Heart right ventricle (tissue), 16 donors: ENCODE measurements at regions of chr15 and their contacts with region 1.

Region 1: GRCh38 chr15:40405501-40406381 is at the start of gene IVD:
- DNase-seq: peak; percentile 95 to 96
- ATAC-seq: peak; percentile 99 to 100 (median 100)
- H3K4me3 ChIP-seq: peak within 1 kb of the TSS; percentile 67 to 98 (median 82)
- H3K27ac ChIP-seq: peak within 1 kb of the TSS in 9 of 10 donors; percentile 62 to 87 (median 78)
- H3K4me1 ChIP-seq: peaks cover 0 to 31% (median 23%) of the 10 kb centered on the region in 9 donors
- H3K27me3 ChIP-seq: no peaks in the 10 kb centered on the region
- CTCF ChIP-seq: no peak
- total RNA-seq, gene IVD: 71.1 to 143 (median 109) TPM

Region 2: DNA sequence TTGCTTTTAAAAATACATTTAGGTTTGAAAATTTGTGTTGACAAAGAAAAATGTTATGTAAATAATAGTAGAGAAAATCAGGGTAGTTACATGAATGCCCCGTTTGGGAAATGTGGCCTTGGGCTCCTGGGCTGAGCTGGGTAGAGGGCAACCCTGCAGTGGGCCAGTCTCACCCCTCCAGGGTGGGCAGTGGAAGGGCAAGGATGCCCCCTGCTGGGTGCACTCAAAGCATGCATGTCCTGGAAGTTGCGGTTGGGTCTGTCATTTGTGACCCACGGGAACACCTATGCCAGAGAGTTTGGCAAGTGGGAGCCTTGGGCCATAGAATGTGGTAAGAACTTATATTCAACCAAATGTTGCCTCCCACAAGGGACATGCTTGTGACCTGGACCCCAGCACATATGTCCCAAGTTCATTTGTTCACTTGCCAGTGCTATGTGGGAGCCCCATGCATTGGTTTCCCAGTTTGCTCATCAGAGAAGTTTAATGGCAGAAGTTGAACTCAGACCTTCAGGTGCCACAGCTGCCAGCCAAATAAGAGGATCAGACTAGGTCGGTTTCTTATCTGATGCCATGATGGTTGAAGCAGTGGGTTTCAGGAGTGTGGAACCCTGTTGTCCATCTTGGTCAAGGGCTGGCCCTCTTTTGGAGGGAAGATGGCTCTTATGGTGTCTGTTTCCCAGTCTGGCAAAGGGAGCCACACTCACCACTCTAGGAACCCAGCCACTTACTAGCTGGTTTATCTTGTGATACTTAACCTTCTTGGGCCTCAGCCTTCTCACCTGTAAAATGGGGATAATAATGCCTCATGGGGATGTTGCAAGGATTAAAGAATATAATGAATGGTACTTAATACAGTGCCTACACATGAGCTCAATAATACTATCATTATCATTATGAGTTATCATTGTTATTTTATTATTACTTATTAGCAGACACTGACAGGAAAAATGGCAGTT is 95.5 kb before region 1 on chr15:
- intact Hi-C with region 1: loop called in 1 of 10 experiments (anchors 5 kb)
- DNase-seq: peak; percentile 63 to 68
- ATAC-seq: peak; percentile 40 to 82 (median 74)
- H3K4me3 ChIP-seq: no peak overlapping the region
- H3K27ac ChIP-seq: no peak overlapping the region
- H3K4me1 ChIP-seq: peaks cover 0 to 45% (median 7%) of the 10 kb centered on the region in 9 donors
- H3K27me3 ChIP-seq: peaks cover 0 to 3% (median 0%) of the 10 kb centered on the region in 7 donors
- CTCF ChIP-seq: peak; percentile 47 to 86 (median 80)

Region 3: DNA sequence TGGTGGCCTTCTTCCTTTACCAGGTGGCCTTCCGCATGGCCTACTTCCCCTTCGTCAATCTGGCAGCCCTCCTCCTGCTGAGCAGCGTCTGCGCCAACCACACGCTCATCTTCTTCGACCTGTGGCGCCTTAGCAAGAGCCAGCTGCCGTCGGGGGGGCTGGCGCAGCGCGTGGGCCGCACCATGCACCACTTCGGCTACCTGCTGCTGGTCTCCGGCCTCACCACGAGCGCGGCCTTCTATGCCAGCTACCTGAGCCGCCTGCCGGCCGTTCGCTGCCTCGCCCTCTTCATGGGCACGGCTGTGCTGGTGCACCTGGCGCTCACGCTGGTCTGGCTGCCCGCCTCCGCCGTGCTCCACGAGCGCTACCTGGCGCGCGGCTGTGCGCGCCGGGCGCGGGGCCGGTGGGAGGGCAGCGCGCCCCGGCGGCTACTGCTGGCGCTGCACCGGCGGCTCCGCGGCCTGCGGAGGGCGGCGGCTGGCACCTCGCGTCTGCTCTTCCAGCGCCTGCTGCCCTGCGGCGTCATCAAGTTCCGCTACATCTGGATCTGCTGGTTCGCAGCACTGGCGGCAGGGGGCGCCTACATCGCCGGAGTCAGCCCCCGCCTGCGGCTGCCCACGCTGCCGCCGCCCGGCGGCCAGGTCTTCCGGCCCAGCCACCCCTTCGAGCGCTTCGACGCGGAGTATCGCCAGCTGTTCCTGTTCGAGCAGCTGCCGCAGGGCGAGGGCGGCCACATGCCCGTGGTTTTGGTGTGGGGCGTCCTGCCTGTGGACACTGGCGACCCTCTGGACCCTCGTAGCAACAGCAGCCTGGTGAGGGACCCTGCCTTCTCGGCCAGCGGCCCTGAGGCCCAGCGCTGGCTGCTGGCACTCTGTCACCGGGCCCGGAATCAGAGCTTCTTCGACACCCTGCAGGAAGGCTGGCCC is 37.8 kb before region 1 on chr15:
- intact Hi-C with region 1: loop called in 5 of 10 experiments (anchors 1 to 10 kb)
- DNase-seq: peak; percentile 79 to 84
- ATAC-seq: peak; percentile 60 to 79 (median 68)
- H3K4me3 ChIP-seq: peak overlapping the region in 9 of 10 donors; percentile 12 to 57 (median 38)
- H3K27ac ChIP-seq: peak overlapping the region; percentile 60 to 91 (median 85)
- H3K4me1 ChIP-seq: peaks cover 3 to 38% (median 29%) of the 10 kb centered on the region in 9 donors
- H3K27me3 ChIP-seq: no peaks in the 10 kb centered on the region
- CTCF ChIP-seq: peak; percentile 75 to 93 (median 88)

Region 4: GRCh38 chr15:40372981-40373380 is 32.8 kb before region 1 on chr15:
- intact Hi-C with region 1: loop called in 4 of 10 experiments (anchors 1 to 10 kb)
- DNase-seq: no peak
- ATAC-seq: no peak
- H3K4me3 ChIP-seq: no peak overlapping the region
- H3K27ac ChIP-seq: no peak overlapping the region
- H3K4me1 ChIP-seq: peaks cover 0 to 18% (median 5%) of the 10 kb centered on the region in 9 donors
- H3K27me3 ChIP-seq: no peaks in the 10 kb centered on the region
- CTCF ChIP-seq: no peak

Region 5: GRCh38 chr15:40382580-40383456 is 22.9 kb before region 1 on chr15 and contains the start of gene KNSTRN:
- intact Hi-C with region 1: loop called in 2 of 10 experiments (anchors 1 to 2 kb)
- DNase-seq: peak; percentile 88 to 94
- ATAC-seq: peak; percentile 96 to 99 (median 98)
- H3K4me3 ChIP-seq: peak within 1 kb of the TSS; percentile 59 to 96 (median 85)
- H3K27ac ChIP-seq: peak within 1 kb of the TSS in 8 of 10 donors; percentile 30 to 82 (median 48)
- H3K4me1 ChIP-seq: peaks cover 0 to 37% (median 21%) of the 10 kb centered on the region in 9 donors
- H3K27me3 ChIP-seq: no peaks in the 10 kb centered on the region
- CTCF ChIP-seq: no peak
- total RNA-seq, gene KNSTRN: 5.3 to 16.0 (median 8.3) TPM

Region 6: GRCh38 chr15:40603928-40604327 is 198.2 kb after region 1 on chr15:
- intact Hi-C with region 1: no loop called
- DNase-seq: no peak
- ATAC-seq: no peak
- H3K4me3 ChIP-seq: no peak overlapping the region
- H3K27ac ChIP-seq: no peak overlapping the region
- H3K4me1 ChIP-seq: no peaks in the 10 kb centered on the region
- H3K27me3 ChIP-seq: no peaks in the 10 kb centered on the region
- CTCF ChIP-seq: no peak